Gastrocnemius medialis (tissue), 4 donors: ENCODE measurements at regions of chr9 and their contacts with region 1.

Region 1: DNA sequence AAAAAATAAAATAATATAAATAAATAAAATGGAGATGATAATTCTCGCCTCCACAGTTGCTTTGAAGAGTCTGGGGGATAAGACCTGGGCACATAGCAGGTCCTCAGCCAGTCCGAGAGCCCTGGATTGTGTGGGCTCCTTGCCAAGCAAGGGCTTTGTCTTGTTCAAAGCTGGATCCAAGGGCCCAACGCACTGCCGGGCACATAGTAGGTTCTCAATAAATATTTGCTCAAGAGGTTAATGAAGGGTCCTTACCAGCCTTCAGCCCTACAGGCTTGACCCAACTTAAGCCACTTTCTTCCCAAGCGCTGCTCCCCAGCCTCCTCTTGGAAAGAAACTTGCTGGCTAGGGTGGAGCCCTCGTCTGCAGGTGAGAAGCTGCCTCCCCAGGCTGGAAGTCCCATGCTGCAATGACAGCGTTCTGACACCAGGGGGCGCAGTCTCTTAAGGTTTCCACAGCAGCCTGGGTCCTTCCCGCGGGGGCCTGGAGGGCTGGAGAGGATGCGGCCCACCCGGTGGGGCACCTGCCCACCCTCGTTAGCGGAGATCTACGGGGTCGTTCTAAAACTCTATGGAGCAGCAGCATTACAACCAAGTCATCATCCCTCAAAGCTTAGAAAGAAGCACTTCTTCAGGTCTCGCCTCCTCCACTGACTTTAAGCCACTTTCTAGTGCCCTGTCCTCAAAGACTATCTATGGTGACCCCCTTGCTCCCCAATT is 115.2 kb downstream of the LHX2 start:
- DNase-seq: peak; percentile 16 to 58
- ATAC-seq: peak; percentile 54 to 68
- H3K4me3 ChIP-seq: no peak overlapping the region
- H3K27ac ChIP-seq: no peak overlapping the region
- H3K4me1 ChIP-seq: no peaks in the 10 kb centered on the region
- H3K27me3 ChIP-seq: no peaks in the 10 kb centered on the region
- CTCF ChIP-seq: peak; percentile 84 to 96 (median 95)
- POLR2A ChIP-seq: no peak

Region 2: GRCh38 chr9:124309665-124310064 is 182.9 kb after region 1 on chr9:
- in situ Hi-C with region 1: loop called in 2 of 4 experiments (anchors 5 to 25 kb)
- intact Hi-C with region 1: no loop called
- DNase-seq: peak in 1 of 2 donors; percentile 37
- ATAC-seq: peak; percentile 46 to 68
- H3K4me3 ChIP-seq: no peak overlapping the region
- H3K27ac ChIP-seq: no peak overlapping the region
- H3K4me1 ChIP-seq: no peaks in the 10 kb centered on the region
- H3K27me3 ChIP-seq: no peaks in the 10 kb centered on the region
- CTCF ChIP-seq: no peak
- POLR2A ChIP-seq: no peak

Region 3: GRCh38 chr9:124320062-124320973 is 193.6 kb after region 1 on chr9:
- in situ Hi-C with region 1: loop called in 3 of 4 experiments (anchors 5 to 25 kb)
- intact Hi-C with region 1: loop called (anchors 2 kb)
- DNase-seq: peak; percentile 31 to 48
- ATAC-seq: peak; percentile 72 to 89
- H3K4me3 ChIP-seq: no peak overlapping the region
- H3K27ac ChIP-seq: no peak overlapping the region
- H3K4me1 ChIP-seq: no peaks in the 10 kb centered on the region
- H3K27me3 ChIP-seq: no peaks in the 10 kb centered on the region
- CTCF ChIP-seq: peak; percentile 59 to 87 (median 82)
- POLR2A ChIP-seq: no peak

Region 4: DNA sequence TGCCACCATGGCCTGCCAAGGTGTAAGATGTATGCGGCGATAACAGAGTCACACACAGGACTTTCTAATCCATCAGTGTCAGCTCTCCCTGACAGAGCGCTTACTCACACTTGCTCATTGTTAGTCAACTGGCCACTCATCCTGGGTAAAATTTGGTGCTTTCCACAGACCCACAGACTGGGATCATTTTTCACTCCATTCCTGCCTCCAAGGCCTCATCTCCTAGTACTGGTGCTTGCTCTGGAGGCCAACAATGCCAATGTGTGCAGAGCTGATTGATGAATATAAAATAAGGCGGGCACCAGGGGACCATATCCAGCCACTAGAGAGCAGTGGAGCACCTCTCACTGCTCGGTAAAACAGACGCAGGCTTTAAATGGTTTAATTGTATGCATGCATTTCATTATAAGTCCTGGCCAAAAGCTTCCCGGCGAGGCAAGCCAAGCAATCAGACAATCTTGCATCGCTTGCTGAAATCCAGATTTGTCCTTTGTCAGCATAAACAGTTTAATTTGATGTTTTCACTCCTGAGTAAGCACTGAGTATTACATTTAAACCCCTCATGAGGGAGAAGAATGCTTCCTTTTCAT is 266.2 kb after region 1 on chr9:
- in situ Hi-C with region 1: loop called in 1 of 4 experiments (anchors 10 kb)
- intact Hi-C with region 1: no loop called
- DNase-seq: no peak
- ATAC-seq: peak; percentile 42 to 51
- H3K4me3 ChIP-seq: no peak overlapping the region
- H3K27ac ChIP-seq: peak overlapping the region in 1 of 4 donors; percentile 30
- H3K4me1 ChIP-seq: peaks cover 55 to 77% of the 10 kb centered on the region in 2 donors
- H3K27me3 ChIP-seq: no peaks in the 10 kb centered on the region
- CTCF ChIP-seq: no peak
- POLR2A ChIP-seq: no peak

Region 5: GRCh38 chr9:124480621-124480981 is 353.9 kb after region 1 on chr9:
- in situ Hi-C with region 1: no loop called
- intact Hi-C with region 1: no loop called
- DNase-seq: no peak
- ATAC-seq: no peak
- H3K4me3 ChIP-seq: no peak overlapping the region
- H3K27ac ChIP-seq: no peak overlapping the region
- H3K4me1 ChIP-seq: no peaks in the 10 kb centered on the region
- H3K27me3 ChIP-seq: peaks cover 40 to 56% (median 48%) of the 10 kb centered on the region in 3 donors
- CTCF ChIP-seq: no peak
- POLR2A ChIP-seq: no peak

Region 6: GRCh38 chr9:124532897-124533296 is 406.2 kb after region 1 on chr9:
- in situ Hi-C with region 1: loop called in 3 of 4 experiments (anchors 10 kb)
- intact Hi-C with region 1: loop called (anchors 2 kb)
- DNase-seq: no peak
- ATAC-seq: no peak
- H3K4me3 ChIP-seq: no peak overlapping the region
- H3K27ac ChIP-seq: no peak overlapping the region
- H3K4me1 ChIP-seq: no peaks in the 10 kb centered on the region
- H3K27me3 ChIP-seq: no peaks in the 10 kb centered on the region
- CTCF ChIP-seq: no peak
- POLR2A ChIP-seq: no peak

Region 7: DNA sequence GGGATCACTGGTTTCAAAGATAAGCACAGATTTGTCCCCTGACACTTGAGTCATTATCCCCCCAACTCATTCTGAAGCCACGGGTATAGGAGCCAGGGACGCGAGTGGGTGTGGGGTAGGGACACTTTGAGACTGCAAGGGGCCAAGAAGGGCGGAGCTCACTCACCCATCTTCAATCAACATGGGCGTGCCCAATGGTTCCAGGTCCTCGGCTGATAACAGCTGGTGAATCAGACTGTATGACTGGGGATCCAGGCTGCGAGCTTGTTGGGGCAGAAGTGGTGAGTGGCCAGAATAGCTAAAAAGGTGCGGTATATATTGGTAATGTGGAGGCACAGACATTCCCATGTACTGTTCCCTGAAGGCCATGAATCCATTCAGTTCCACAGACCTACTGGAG is 411.2 kb after region 1 on chr9:
- in situ Hi-C with region 1: loop called in 3 of 4 experiments (anchors 10 kb)
- intact Hi-C with region 1: loop called (anchors 2 kb)
- DNase-seq: no peak
- ATAC-seq: no peak
- H3K4me3 ChIP-seq: no peak overlapping the region
- H3K27ac ChIP-seq: no peak overlapping the region
- H3K4me1 ChIP-seq: no peaks in the 10 kb centered on the region
- H3K27me3 ChIP-seq: no peaks in the 10 kb centered on the region
- CTCF ChIP-seq: no peak
- POLR2A ChIP-seq: no peak